ENCODE measurements at regions of chr11 and their contacts with region 1.

Region 1: DNA sequence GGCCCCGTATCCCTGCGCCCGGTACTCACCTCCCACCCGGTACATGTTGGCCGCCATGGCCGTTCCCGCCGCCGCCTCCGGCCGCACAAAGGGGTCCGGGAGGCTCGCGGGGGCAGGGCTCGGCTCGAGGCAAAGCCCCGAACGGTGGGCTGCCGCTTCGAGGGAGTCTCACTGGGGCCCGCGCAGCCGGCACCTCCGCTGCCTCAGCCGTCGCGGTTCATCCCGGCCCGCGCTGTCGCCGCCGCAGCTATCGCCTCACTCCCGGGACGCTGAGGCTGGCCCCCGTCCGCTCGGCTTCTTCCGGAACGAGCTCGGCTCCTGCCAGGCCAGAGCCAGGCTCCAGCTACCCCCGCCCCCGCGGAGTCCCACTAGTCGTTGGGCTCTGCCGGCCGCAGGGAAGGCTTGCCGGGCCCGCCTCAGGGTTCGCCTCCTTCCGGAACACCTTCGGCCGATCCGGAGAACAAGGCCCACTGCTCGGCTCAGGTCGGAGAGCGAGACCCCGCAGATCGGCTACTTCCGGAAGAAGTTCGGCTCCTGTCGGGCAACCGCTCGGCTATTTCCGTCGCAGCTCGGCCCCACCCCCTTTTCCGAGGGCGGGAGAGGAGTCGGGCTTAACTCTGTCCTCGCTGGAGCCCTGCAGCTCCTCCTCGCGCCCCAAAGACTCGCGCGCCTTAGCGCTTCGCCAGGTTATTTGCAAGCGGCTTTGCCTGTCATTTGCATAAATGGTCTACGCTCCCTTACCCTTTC is at the start of gene MTA2:
- DNase-seq: peak; percentile 98 to 100
- H3K4me3 ChIP-seq: peak within 1 kb of the TSS; percentile 74 to 86 (median 84)
- H3K27ac ChIP-seq: peak within 1 kb of the TSS; percentile 79
- H3K4me1 ChIP-seq: peaks cover 7 to 32% (median 17%) of the 10 kb centered on the region in 4 experiments
- H3K27me3 ChIP-seq: peaks cover 0 to 13% (median 11%) of the 10 kb centered on the region in 4 experiments; a peak in 6 of 7 replicates
- CTCF ChIP-seq: no peak
- EP300 ChIP-seq: no peak
- POLR2A ChIP-seq: peak in 1 of 2 experiments; percentile 78; a peak in 2 of 3 replicates
- RAD21 ChIP-seq: no peak
- total RNA-seq, gene MTA2: 114 and 117 TPM in 2 replicates

Region 2: DNA sequence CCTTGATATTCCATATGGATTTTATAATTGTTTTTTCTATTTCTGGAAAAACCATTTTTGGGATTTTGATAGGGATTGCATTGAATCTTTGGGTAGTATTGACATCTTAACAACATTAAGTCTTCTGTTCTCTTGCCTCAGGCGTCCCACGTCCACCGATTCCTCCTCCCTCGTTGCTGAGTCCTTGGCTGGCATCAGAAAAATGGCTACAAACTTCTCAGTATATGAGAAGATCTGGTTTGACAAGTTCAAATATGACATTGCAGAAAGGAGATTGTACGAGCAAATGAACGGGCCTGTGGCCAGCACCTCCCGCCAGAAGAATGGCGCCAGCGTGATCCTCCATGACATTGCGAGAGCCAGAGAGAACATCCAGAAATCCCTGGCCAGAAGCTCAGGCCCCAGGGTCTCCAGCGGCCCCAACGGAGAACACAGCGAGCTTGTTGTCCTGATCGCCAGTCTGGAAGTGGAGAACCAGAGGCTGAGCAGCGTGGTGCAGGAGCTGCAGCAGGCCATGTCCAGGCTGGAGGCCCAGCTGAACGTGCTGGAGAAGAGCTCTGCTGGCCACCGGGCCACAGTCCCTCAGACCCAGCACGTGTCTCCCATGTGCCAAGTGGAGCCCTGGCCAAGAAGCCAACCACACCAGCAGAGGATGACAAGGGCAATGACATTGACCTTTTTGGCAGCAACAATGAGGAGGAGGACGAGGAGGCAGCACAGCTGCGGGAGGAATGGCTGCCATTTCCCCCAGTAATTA is 432.3 kb before region 1 on chr11:
- CTCF ChIA-PET with region 1: no interaction called
- POLR2A ChIA-PET with region 1: no interaction called
- DNase-seq: no peak
- H3K4me3 ChIP-seq: no peak overlapping the region
- H3K27ac ChIP-seq: no peak overlapping the region
- H3K4me1 ChIP-seq: no peaks in the 10 kb centered on the region
- H3K27me3 ChIP-seq: no peaks in the 10 kb centered on the region
- CTCF ChIP-seq: no peak
- EP300 ChIP-seq: no peak
- POLR2A ChIP-seq: no peak
- RAD21 ChIP-seq: no peak

Region 3: DNA sequence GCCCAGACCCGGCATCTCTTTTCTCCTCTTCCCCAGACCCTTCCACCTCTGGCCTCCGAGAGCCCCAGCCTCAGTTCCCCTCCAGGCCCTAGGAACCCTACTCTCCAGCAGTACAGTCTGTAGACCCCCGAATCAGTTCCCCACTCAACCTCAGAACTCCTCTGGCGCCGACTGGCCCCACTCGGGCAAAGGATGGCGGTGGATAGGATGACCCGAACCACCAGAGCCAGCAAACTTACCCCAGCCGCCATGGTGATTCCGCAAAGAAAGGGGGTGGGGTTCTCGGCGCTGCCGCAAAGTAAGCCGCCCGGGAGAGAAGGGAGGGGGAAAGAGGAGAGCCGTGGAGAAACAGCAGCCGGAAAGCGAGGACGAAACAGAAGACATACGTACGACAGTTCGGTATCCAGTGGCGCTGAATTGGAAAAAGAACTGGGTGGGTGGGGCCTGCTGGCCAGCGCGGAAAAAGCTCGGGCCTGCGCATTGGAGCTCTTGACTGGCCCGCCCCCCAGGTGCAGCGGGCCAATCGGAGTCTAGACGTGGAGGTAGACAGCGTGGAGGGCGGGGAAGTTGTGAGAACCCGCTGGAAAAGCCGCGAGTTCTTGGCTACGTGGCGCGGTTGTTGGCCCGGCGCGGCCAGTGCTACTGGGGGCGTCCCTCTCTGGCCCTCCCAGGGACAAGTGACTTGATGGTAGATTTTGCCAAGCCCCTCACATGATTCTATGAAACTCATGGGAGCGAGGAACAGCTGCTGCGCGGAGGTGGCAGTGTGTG is 27.8 kb before region 1 on chr11 and contains the start of gene EEF1G:
- CTCF ChIA-PET with region 1: interaction called, 4 read pairs
- POLR2A ChIA-PET with region 1: interaction called, 16 read pairs
- DNase-seq: peak; percentile 96 to 99
- H3K4me3 ChIP-seq: peak within 1 kb of the TSS; percentile 90 to 100 (median 91)
- H3K27ac ChIP-seq: peak within 1 kb of the TSS; percentile 75
- H3K4me1 ChIP-seq: peaks cover 0 to 11% (median 7%) of the 10 kb centered on the region in 4 experiments; a peak in 4 of 7 replicates
- H3K27me3 ChIP-seq: no peaks in the 10 kb centered on the region
- CTCF ChIP-seq: no peak
- EP300 ChIP-seq: peak in 1 of 2 experiments; percentile 48; a peak in 1 of 3 replicates
- POLR2A ChIP-seq: peak; percentile 64 to 86
- RAD21 ChIP-seq: no peak
- total RNA-seq, gene EEF1G: 1,622 and 1,627 TPM in 2 replicates

Region 4: DNA sequence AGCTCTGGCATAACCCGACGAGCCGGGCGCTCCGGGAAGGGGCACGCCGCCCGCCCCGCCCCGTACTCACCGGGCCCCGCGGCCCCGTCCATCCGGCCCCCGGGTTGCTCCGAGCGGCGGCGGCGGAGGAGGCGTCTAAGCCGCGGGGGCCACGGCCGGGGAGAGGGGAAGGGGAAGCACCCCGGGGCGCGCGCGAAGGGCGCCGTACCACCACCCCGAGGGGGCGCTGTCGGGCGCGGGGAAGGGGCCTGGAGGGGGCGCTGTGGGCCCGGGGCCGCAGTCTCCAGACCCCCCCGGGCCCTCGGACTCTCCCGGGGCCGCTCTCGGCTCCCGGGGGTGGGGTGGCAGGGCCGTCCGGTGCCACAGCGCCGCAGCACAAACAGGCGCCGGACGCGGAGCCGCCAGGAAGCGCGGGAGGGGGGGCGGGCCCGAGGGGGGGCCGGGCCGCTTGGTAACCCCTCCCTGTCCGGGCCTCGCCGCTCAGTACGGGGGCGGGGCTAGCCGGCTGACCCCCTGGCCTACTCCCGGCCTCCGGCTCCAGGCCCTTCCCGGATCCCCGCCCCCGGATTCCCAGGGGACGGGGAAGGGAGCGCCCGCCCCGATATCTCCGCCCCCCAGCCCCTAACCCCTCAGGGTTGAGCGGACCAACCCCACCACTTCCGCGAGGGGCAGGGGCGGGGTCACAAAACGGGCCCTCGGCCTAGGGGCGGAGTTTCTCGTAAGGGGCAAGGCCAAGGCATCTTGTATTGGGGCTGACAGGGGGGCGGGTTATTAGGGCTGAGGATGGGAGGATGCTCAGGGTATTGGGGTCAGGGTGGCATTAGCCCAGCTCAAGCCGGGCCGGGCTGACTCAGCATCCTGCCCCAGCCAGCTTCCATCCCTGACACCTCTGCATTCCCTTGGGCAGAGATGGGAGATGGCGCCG is 11.1 kb after region 1 on chr11 and contains the starts of genes EML3 and ROM1:
- CTCF ChIA-PET with region 1: interaction called, 97 read pairs
- POLR2A ChIA-PET with region 1: interaction called, 235 read pairs
- DNase-seq: peak; percentile 85 to 94
- H3K4me3 ChIP-seq: peak within 1 kb of the TSS; percentile 48 to 73 (median 58)
- H3K27ac ChIP-seq: no peak within 1 kb of the TSS
- H3K4me1 ChIP-seq: peaks cover 0 to 19% (median 12%) of the 10 kb centered on the region in 4 experiments; a peak in 6 of 7 replicates
- H3K27me3 ChIP-seq: peaks cover 0 to 3% (median 2%) of the 10 kb centered on the region in 4 experiments; a peak in 1 of 7 replicates
- CTCF ChIP-seq: peak; percentile 65 to 100 (median 87)
- EP300 ChIP-seq: no peak
- POLR2A ChIP-seq: no peak; a peak in 1 of 3 replicates
- RAD21 ChIP-seq: peak; percentile 23 to 47; a peak in 3 of 4 replicates
- total RNA-seq, gene EML3: 29.9 and 31.2 TPM in 2 replicates
- total RNA-seq, gene ROM1: 0.55 and 2.2 TPM in 2 replicates

Region 5: GRCh38 chr11:62621567-62622470 is 20.3 kb after region 1 on chr11 and contains the start of gene B3GAT3:
- CTCF ChIA-PET with region 1: interaction called, 3 read pairs
- POLR2A ChIA-PET with region 1: interaction called, 235 read pairs
- DNase-seq: peak; percentile 97 to 98
- H3K4me3 ChIP-seq: peak within 1 kb of the TSS; percentile 59 to 87 (median 83)
- H3K27ac ChIP-seq: peak within 1 kb of the TSS; percentile 46
- H3K4me1 ChIP-seq: peaks cover 0 to 5% (median 0%) of the 10 kb centered on the region in 4 experiments; a peak in 1 of 7 replicates
- H3K27me3 ChIP-seq: no peaks in the 10 kb centered on the region
- CTCF ChIP-seq: peak in 1 of 3 experiments; percentile 7; a peak in 1 of 4 replicates
- EP300 ChIP-seq: no peak
- POLR2A ChIP-seq: peak in 1 of 2 experiments; percentile 96; a peak in 2 of 3 replicates
- RAD21 ChIP-seq: peak; percentile 0; a peak in 2 of 4 replicates
- total RNA-seq, gene B3GAT3: 28.0 and 34.5 TPM in 2 replicates

Region 6: DNA sequence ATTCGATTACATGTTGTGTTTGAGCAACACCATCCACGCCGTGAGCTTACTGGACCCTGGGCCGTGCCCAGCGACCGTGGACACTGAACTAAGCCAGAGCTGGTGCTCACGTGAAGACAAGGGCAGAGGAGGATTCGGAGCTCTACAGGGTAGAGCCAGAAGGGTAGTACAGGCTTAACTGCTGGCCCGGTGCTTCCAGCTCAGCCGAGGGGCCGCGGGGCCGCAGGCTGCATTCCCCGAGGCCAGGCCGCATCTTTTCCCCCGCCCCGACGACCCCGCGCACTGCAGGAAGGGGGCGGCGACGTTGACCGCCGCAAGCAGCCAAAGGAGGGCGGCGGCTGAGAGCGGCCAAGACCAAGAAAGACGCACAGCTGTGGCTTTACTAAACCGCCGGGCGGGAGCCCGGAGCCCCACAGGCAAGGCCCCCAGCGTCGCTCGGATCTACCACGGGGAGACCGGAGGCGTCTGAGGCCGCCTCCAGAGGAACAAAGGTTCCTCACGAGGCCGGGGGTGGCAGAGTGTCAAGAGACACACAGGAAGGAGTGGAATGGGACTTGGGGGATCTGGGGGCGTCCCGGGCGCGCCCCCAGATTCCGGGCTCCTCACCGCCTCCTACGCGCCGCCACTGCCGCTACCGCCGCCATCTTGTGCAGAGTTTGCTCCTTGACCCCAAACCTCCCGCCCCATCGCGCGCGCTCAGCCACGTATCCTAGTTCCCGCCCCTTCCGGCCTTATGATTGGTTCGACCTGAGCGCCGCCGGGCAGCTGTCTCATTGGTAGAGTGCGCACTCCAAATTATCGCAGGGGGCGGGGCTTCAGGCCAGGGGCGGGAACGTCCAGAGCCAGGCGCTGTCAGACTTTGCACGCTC is 44.6 kb after region 1 on chr11 and contains the start of gene GANAB:
- CTCF ChIA-PET with region 1: interaction called, 3 read pairs
- POLR2A ChIA-PET with region 1: interaction called, 10 read pairs
- DNase-seq: peak; percentile 87 to 96
- H3K4me3 ChIP-seq: peak within 1 kb of the TSS; percentile 71 to 99 (median 90)
- H3K27ac ChIP-seq: peak within 1 kb of the TSS; percentile 90
- H3K4me1 ChIP-seq: no peaks in the 10 kb centered on the region; a peak in 2 of 7 replicates
- H3K27me3 ChIP-seq: no peaks in the 10 kb centered on the region
- CTCF ChIP-seq: no peak
- EP300 ChIP-seq: no peak
- POLR2A ChIP-seq: peak; percentile 82 to 99
- RAD21 ChIP-seq: no peak
- total RNA-seq, gene GANAB: 326 and 330 TPM in 2 replicates

Measured in H1 (cell line).